ENCODE measurements at regions of chr9 and their contacts with region 1.

Region 1: GRCh38 chr9:104177003-104177611 is 83.0 kb downstream of the SMC2 start:
- DNase-seq: no peak

Region 2: DNA sequence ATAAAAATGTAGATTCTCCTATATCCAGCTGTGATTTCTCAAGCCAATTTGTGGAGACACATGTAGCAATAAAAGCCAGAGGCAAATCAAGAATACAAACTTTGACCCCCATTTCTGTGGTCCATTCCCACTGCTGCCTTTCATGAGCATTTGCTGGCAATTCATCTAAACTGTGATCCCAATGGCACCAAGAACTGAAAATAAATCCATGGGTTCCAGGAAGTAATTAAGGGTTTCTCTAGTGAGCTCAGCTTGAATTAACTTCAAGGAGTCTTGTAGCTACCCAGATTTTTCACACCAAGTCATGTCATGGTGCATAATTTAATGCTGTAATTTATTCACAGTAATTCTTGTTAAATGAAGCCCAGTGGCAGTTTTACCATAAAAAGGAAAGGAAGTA is 228.0 kb before region 1 on chr9:
- intact Hi-C with region 1: no loop called
- DNase-seq: no peak

Region 3: DNA sequence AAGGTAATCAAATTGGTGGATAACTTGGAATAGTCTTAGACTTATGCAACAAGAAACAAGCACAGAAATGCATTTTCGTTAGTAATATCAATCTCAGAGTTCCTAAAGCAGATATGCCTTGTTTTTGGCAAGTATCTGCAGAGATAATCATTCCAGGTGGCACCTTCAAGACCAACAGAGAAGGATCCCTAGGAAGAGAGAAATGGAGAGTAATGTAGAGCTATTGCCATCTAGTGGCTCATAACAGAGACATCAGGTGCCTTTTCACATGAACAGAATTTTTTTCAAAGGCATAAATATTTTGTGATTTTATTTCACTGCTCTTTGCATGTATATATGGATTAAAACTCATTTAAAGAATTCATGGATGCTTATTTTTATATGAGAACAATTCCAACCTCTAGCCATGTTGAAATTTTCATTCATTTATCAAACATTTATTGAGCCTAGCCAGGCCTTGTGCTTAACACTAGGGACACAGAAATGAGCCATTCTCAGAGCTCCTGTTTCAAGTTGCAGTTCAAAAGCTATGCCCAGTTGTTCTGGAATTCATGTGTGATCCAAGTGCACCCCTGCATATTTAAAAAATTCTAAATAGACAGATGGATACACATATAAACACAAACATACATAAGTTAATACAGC is 209.4 kb after region 1 on chr9:
- intact Hi-C with region 1: loop called (anchors 5 kb)
- DNase-seq: no peak

Measured in cardiac septum (tissue), 1 donor.